ENCODE measurements at regions of chr7 and their contacts with region 1.

Region 1: DNA sequence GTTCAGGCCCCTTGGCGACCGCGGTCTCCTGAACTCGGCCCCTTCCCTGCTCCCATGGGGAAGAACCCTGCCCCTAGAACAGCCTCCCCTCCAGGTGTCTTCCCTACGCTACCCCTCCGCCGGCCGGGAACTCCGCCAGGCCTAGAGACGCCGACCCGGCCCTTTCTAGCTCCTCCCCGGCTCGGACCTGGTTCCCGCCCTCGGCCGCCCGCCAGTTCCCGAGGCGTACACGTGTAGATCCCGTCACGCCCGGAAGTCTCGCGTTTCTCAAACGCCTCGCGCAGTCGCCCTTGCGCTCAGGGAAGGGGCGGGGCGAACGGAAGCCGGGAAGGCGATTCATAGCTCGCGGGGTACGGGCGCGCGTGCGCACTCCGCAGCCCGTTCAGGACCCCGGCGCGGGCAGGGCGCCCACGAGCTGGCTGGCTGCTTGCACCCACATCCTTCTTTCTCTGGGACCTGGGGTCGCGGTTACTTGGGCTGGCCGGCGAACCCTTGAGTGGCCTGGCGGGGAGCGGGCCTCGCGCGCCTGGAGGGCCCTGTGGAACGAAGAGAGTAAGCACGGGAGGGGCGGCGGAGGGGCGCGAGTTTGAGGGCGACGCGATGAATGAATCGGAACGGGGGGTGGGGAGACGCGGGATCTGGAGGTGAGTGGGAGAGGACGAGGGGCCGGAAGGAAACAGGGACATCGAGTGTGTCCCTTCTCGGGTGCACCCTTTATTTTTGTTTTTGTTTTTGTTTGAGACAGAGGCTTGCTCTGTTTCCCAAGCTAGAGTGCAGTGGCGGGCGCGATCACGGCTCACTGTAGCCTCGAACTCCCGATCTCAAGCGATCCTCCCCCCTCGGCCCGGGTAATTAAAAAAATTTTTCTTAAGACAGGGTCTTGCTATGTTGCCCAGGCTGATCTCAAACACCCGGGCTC is at the start of gene POP7:
- DNase-seq: peak; percentile 99
- ATAC-seq: peak; percentile 96
- H3K4me3 Mint-ChIP-seq: peak within 1 kb of the TSS; percentile 96
- H3K27ac Mint-ChIP-seq: peak within 1 kb of the TSS; percentile 96
- H3K4me1 Mint-ChIP-seq: peaks cover 12% of the 10 kb centered on the region
- H3K27me3 Mint-ChIP-seq: no peaks in the 10 kb centered on the region
- total RNA-seq, gene POP7: 46.1 to 59.4 TPM

Region 2: DNA sequence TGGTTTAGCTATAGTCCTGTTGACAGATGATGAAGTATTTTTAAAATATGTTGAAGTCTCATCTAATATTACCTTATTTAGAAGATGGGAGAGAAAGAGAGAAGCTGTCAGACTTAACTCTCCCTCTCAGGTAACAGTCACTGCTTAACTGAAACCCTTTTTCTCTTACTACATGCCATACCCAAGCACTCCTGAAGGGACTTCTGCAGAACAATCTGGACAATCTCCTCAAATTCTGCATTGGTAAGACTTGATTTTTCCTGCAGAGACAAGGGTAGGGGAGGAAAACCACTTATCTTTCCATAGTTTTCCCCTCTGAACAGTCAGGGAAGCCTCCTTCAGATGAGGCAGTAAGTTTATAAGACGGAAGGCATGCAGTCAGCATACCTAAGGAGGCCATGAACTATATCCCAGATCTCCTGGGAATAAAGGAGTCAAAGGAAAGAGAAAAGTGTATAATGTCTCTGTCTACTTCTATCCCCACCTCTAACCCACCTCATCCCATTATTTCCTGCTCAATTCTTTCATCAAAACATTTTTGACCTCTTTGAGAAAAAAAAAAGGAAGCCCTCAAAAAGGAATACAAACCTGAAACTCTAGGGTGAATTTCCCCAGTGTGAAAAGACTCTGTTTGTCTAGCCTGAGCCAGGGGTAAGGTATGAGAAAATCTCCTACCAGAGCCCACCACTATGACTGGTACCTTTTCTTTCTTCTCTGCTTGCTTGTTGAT is 286.9 kb before region 1 on chr7:
- CTCF ChIA-PET with region 1: no interaction called
- POLR2A ChIA-PET with region 1: no interaction called
- intact Hi-C with region 1: no loop called
- DNase-seq: no peak
- ATAC-seq: no peak
- H3K4me3 Mint-ChIP-seq: no peak overlapping the region
- H3K27ac Mint-ChIP-seq: no peak overlapping the region
- H3K4me1 Mint-ChIP-seq: no peaks in the 10 kb centered on the region
- H3K27me3 Mint-ChIP-seq: no peaks in the 10 kb centered on the region

Region 3: GRCh38 chr7:100626530-100627237 is 79.3 kb before region 1 on chr7:
- CTCF ChIA-PET with region 1: interaction called, 22 read pairs
- POLR2A ChIA-PET with region 1: interaction called, 3 read pairs
- intact Hi-C with region 1: loop called in 1 of 2 experiments (anchors 1 kb)
- DNase-seq: peak; percentile 96
- ATAC-seq: peak; percentile 99
- H3K4me3 Mint-ChIP-seq: peak overlapping the region; percentile 71
- H3K27ac Mint-ChIP-seq: peak overlapping the region; percentile 47
- H3K4me1 Mint-ChIP-seq: peaks cover 13% of the 10 kb centered on the region
- H3K27me3 Mint-ChIP-seq: no peaks in the 10 kb centered on the region

Region 4: GRCh38 chr7:100682228-100682741 is 23.7 kb before region 1 on chr7:
- CTCF ChIA-PET with region 1: interaction called, 11 read pairs
- POLR2A ChIA-PET with region 1: interaction called, 5 read pairs
- intact Hi-C with region 1: no loop called
- DNase-seq: no peak
- ATAC-seq: peak; percentile 20
- H3K4me3 Mint-ChIP-seq: no peak overlapping the region
- H3K27ac Mint-ChIP-seq: no peak overlapping the region
- H3K4me1 Mint-ChIP-seq: peaks cover 24% of the 10 kb centered on the region
- H3K27me3 Mint-ChIP-seq: no peaks in the 10 kb centered on the region

Region 5: GRCh38 chr7:100726996-100727761 is 21.2 kb after region 1 on chr7:
- CTCF ChIA-PET with region 1: interaction called, 20 read pairs
- POLR2A ChIA-PET with region 1: interaction called, 5 read pairs
- intact Hi-C with region 1: loop called (anchors 1 kb)
- DNase-seq: no peak
- ATAC-seq: no peak
- H3K4me3 Mint-ChIP-seq: no peak overlapping the region
- H3K27ac Mint-ChIP-seq: no peak overlapping the region
- H3K4me1 Mint-ChIP-seq: peaks cover 3% of the 10 kb centered on the region
- H3K27me3 Mint-ChIP-seq: peaks cover 13% of the 10 kb centered on the region

Region 6: DNA sequence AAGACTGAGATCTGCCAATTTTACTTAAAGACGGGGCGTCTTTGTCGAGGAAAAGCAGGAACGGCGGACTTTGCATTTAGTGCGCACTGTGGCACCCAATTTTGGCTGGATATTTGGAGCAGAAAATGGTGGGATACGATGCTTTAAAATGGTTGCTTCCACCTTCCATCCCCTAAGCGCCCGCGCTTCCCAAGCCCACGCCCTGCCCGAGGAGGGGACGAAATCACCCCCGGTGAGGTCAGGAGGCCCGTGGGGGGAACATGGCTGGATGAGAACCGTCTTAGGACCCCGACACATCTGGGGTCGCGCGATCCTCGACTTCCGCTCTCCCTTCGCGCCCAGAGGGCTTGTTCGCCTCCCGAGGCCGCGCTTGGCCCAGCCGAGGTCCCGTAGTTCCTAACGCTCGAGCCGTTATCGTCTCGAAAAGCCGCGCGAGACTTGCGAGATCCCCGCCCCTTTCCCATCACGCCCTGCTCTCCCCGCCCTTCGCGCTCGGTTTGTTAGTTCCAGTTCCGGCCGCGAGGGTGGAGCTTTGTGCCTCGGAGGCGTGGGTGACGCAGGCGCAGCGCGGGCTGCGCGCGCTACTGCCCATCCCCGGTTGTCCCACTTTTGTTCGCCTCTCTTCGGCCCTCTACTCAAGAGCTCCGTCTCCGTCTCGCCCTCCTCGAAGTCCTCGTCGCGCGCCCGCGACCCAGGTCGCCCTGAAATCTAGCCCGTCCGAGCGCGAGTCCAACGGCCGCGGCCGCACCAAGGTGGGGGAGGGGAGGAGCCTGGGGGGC is 168.8 kb after region 1 on chr7 and contains the start of gene SRRT:
- CTCF ChIA-PET with region 1: interaction called, 6 read pairs
- POLR2A ChIA-PET with region 1: interaction called, 8 read pairs
- intact Hi-C with region 1: loop called (anchors 1 to 5 kb)
- DNase-seq: peak; percentile 99
- ATAC-seq: peak; percentile 95
- H3K4me3 Mint-ChIP-seq: peak within 1 kb of the TSS; percentile 99
- H3K27ac Mint-ChIP-seq: peak within 1 kb of the TSS; percentile 99
- H3K4me1 Mint-ChIP-seq: peaks cover 45% of the 10 kb centered on the region
- H3K27me3 Mint-ChIP-seq: no peaks in the 10 kb centered on the region
- total RNA-seq, gene SRRT: 253 to 260 TPM

Region 7: DNA sequence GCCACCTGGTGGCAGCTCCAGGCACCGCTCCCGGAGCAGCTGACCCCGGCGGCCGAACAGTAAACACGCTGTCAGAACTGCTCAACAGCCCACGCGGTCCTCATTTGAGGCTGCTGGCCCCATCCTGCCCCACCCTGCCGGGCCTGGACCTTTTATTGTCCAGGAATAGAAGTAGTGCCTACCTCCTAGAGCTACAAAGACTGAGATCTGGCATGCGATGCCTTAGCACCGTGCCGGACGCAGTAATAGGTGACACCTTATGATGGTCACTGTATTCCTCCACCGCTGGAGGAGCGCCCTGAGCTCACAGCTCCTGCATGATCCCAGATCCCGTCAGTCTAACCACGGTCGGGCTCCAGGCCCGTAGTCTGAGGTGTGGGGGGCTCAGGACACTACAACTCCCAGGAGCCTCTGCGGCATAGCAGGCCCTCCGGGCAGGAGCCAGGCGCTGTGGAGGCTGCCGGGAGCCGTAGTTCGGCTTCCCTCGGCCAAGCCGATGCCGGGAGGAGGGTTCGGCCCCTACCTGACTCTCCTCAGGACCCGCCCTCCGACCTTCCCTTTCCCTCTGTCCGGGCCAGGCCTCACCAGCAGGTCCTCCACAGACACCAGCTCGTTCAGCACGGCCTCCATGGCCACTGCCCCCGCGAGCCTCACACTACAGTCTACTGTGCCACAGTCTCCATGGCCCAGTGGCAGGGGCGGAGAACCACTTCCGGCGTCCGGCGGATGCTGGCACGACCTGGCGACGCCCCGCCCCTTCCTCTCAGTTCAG is 538.5 kb after region 1 on chr7 and contains the start of gene FIS1:
- CTCF ChIA-PET with region 1: interaction called, 3 read pairs
- POLR2A ChIA-PET with region 1: no interaction called
- intact Hi-C with region 1: loop called in 1 of 2 experiments (anchors 1 kb)
- DNase-seq: peak; percentile 97
- ATAC-seq: peak; percentile 96
- H3K4me3 Mint-ChIP-seq: peak within 1 kb of the TSS; percentile 97
- H3K27ac Mint-ChIP-seq: peak within 1 kb of the TSS; percentile 97
- H3K4me1 Mint-ChIP-seq: peaks cover 25% of the 10 kb centered on the region
- H3K27me3 Mint-ChIP-seq: no peaks in the 10 kb centered on the region
- total RNA-seq, gene FIS1: 70.5 to 92.6 TPM